ENCODE measurements at regions of chr7 and their contacts with region 1.

Region 1: GRCh38 chr7:36280840-36281812 is 108.5 kb upstream of the ANLN start:
- DNase-seq: peak; percentile 61 to 93 (median 85)
- H3K4me3 ChIP-seq: peak overlapping the region in 56 of 59 donors; percentile 1 to 64 (median 40)
- H3K27ac ChIP-seq: peak overlapping the region; percentile 80 to 99 (median 95)
- H3K27me3 ChIP-seq: no peaks in the 10 kb centered on the region
- CTCF ChIP-seq: peak in 14 of 56 donors; percentile 7 to 27 (median 14)

Region 2: GRCh38 chr7:36161981-36162380 is 119.1 kb before region 1 on chr7:
- intact Hi-C with region 1: no loop called
- DNase-seq: no peak
- H3K4me3 ChIP-seq: no peak overlapping the region
- H3K27ac ChIP-seq: no peak overlapping the region
- H3K27me3 ChIP-seq: no peaks in the 10 kb centered on the region
- CTCF ChIP-seq: no peak

Region 3: DNA sequence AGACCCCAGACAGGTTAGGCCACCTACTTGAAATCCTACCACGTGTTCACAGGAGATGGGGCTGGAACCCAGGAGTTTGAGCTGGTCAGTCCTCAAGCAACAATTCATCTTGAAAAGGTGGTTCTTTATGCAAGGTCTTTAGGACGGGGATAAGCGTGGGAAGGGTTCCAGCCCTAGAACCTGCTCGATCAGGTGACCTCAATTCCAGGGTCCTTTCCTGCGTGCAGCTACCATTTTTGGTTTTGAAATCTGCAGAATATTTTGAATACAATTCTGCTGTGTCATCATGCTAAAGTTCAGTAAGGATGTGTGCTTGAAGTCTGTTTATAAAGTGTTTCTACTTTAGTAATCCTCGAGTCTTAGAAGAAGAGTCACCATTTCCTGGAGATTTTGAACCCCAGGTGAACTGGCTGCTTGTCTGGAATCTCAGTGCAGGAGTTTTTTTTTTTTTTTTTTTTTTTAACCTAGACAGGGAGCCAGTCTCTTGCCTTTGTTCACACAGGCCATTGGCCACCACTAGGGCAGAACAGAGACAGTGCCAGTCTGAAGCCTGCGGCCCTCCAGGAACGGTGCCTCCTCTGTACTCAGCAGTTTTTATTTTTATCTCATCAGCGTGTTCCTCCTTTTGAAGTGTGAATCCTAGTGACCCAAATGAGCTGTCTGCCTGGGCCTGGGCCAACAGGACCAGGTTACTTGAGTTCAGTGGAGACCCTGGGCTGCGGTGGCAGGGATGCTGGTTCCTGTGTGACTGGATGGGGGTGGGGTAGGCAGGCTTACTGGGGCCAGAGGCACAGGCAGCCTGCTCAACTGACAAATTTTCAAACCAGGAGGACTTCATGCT is 73.5 kb before region 1 on chr7:
- intact Hi-C with region 1: loop called (anchors 5 to 10 kb)
- DNase-seq: peak in 9 of 10 donors; percentile 13 to 71 (median 54)
- H3K4me3 ChIP-seq: no peak overlapping the region
- H3K27ac ChIP-seq: peak overlapping the region in 42 of 59 donors; percentile 4 to 80 (median 42)
- H3K27me3 ChIP-seq: no peaks in the 10 kb centered on the region
- CTCF ChIP-seq: peak in 31 of 56 donors; percentile 11 to 40 (median 27)

Region 4: DNA sequence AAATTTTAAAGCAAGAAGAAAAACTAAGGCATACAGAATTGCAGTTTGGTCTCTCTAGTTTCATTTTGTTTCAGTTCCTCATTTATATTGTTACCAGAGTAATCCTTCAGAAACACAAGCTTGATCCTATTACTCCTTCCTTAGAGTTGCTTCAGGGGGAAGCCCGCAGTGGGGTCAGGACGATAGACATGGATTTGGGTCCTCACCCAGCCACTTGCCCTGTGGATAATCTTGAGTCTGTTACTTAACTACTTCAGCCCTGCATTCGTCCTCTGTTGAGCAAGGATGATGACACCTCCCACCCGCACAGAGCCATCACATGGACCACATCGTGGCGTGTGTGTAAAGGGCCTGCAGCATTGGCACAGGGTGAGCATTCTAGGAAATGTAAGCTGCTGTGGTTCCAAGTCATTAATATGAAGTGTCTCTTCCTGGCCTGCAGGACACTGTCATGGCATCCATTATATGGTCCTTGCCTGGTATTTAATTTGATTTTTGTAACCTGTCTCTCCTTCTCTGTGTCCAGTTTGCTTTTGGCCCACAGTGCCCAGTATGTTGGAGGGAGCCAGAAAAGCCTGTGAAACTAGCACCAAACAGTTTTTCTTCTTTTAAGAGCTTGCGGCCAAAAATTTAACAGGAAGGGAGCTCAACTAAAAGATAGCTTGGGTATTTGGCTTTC is 16.9 kb before region 1 on chr7:
- intact Hi-C with region 1: loop called in 1 of 2 experiments (anchors 2 kb)
- DNase-seq: peak in 1 of 10 donors; percentile 52
- H3K4me3 ChIP-seq: peak overlapping the region in 2 of 59 donors; percentile 2 to 10
- H3K27ac ChIP-seq: peak overlapping the region in 48 of 59 donors; percentile 3 to 80 (median 58)
- H3K27me3 ChIP-seq: no peaks in the 10 kb centered on the region
- CTCF ChIP-seq: no peak

Measured in dorsolateral prefrontal cortex (tissue), 120 donors.